AG04450 (cell line): ENCODE measurements at regions of chr3 and their contacts with region 1.

Region 1: DNA sequence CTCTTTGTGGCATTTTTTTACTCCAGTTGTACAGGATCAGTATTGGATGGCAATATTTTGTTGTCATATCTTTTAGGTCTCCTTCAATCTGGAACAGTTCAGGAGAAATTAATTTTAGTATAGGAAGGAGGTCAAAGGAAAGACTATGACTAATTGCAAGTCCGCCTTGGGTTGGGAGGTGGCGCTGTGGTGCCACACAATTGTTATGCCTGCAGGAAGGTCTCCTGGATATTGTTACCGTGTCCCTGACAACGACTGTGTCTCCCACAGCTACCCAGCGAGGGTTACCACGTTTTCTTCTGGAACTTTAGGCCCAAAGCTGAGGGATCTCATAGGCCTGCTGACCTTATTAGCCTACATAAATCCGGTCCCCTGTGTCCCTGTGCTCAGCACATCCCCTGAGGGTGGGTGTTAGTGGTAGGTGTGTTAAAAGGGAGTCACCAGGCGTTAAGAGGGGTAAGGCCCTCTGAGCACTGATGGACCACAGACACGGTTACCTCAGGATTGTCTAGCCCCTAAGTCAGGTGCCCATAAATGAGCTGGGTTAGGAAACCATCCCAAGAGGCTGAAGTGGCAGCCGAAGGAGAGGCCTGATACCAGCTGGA is 31.5 kb downstream of the KCNAB1 start:
- DNase-seq: peak; percentile 16
- H3K4me3 ChIP-seq: no peak overlapping the region
- H3K27ac ChIP-seq: no peak overlapping the region
- H3K27me3 ChIP-seq: no peaks in the 10 kb centered on the region
- CTCF ChIP-seq: peak; percentile 78

Region 2: DNA sequence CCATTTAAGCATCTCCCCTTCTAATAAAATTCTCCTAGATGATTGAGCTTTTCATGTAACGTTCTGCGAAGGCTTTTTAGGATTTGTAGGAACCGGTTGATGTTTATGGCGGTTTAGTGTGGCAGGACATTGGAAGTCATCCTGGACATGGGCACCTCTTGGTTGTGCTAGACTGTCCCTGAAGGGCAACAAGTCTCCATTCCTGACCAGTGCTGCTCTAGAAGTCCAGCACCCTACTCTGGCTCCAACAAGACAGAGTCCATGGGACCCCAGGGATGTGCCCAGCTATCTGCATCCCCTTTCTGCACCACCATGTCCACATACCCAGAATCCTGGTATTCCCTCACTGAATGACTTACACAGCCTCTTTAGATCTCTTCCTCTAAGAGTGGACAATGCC is 14.9 kb after region 1 on chr3:
- CTCF ChIA-PET with region 1: interaction called, 16 read pairs
- POLR2A ChIA-PET with region 1: no interaction called
- DNase-seq: no peak
- H3K4me3 ChIP-seq: no peak overlapping the region
- H3K27ac ChIP-seq: no peak overlapping the region
- H3K27me3 ChIP-seq: no peaks in the 10 kb centered on the region
- CTCF ChIP-seq: no peak

Region 3: GRCh38 chr3:156449712-156450574 is 298.0 kb after region 1 on chr3:
- CTCF ChIA-PET with region 1: interaction called, 54 read pairs
- POLR2A ChIA-PET with region 1: no interaction called
- DNase-seq: no peak
- H3K4me3 ChIP-seq: no peak overlapping the region
- H3K27ac ChIP-seq: no peak overlapping the region
- H3K27me3 ChIP-seq: peaks cover 6% of the 10 kb centered on the region
- CTCF ChIP-seq: peak; percentile 62

Region 4: DNA sequence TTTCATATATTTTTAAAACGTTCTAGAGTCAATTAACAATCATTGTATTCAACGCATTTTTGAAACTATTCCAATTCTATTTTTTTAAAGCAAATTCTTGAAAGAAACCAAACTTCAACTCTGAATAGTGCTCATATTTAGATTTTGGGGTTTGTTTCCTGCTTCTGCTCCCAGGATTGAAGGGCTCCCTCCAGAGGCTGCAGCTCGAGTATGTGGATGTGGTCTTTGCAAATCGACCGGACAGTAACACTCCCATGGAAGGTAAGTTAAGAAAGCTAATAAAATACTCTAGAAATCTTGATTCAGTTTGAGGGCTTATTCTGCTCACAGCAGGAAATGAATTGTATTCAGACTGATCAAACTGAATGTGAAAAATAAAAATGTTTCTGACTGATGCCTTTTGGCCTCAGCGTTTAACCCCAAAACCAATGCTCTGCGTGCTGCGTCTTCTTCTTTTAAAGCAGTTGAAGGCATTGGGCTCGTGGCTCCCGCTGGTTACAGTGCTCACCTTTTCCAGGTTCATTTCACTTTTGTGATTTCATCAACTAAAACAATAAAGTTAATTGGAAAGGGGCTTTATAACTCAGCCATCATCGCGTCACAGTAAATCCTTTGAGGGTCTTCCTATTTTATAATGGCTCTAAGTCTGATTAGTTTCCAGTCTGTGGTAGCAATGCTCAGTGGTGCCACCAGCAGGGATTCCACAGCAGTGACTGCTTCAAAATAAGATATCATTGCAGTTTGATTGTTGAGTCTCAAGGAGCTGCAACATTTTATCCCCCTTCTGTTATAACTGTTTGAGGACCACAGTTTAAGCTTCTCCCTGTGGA is 322.8 kb after region 1 on chr3:
- CTCF ChIA-PET with region 1: interaction called, 14 read pairs
- POLR2A ChIA-PET with region 1: no interaction called
- DNase-seq: no peak
- H3K4me3 ChIP-seq: no peak overlapping the region
- H3K27ac ChIP-seq: no peak overlapping the region
- H3K27me3 ChIP-seq: peaks cover 2% of the 10 kb centered on the region
- CTCF ChIP-seq: peak; percentile 44

Region 5: GRCh38 chr3:156519758-156520162 is 367.8 kb after region 1 on chr3:
- CTCF ChIA-PET with region 1: interaction called, 49 read pairs
- POLR2A ChIA-PET with region 1: no interaction called
- DNase-seq: no peak
- H3K4me3 ChIP-seq: no peak overlapping the region
- H3K27ac ChIP-seq: no peak overlapping the region
- H3K27me3 ChIP-seq: no peaks in the 10 kb centered on the region
- CTCF ChIP-seq: no peak

Region 6: GRCh38 chr3:157201648-157202278 is 1049.8 kb after region 1 on chr3:
- CTCF ChIA-PET with region 1: interaction called, 11 read pairs
- POLR2A ChIA-PET with region 1: no interaction called
- DNase-seq: no peak
- H3K4me3 ChIP-seq: no peak overlapping the region
- H3K27ac ChIP-seq: no peak overlapping the region
- H3K27me3 ChIP-seq: no peaks in the 10 kb centered on the region
- CTCF ChIP-seq: peak; percentile 50